ENCODE measurements at regions of chr12 and their contacts with region 1.

Region 1: GRCh38 chr12:132470978-132471857 is 18.7 kb upstream of the FBRSL1 start:
- DNase-seq: peak in 2 of 14 experiments; percentile 55 to 60
- ATAC-seq: peak; percentile 13
- H3K4me3 ChIP-seq: no peak overlapping the region
- H3K4me3 Mint-ChIP-seq: peak overlapping the region; percentile 70
- H3K27ac ChIP-seq: no peak overlapping the region
- H3K27ac Mint-ChIP-seq: peak overlapping the region; percentile 85
- H3K4me1 ChIP-seq: peaks cover 37% of the 10 kb centered on the region
- H3K4me1 Mint-ChIP-seq: peaks cover 50% of the 10 kb centered on the region
- H3K27me3 ChIP-seq: no peaks in the 10 kb centered on the region
- H3K27me3 Mint-ChIP-seq: no peaks in the 10 kb centered on the region
- CTCF ChIP-seq: no peak

Region 2: DNA sequence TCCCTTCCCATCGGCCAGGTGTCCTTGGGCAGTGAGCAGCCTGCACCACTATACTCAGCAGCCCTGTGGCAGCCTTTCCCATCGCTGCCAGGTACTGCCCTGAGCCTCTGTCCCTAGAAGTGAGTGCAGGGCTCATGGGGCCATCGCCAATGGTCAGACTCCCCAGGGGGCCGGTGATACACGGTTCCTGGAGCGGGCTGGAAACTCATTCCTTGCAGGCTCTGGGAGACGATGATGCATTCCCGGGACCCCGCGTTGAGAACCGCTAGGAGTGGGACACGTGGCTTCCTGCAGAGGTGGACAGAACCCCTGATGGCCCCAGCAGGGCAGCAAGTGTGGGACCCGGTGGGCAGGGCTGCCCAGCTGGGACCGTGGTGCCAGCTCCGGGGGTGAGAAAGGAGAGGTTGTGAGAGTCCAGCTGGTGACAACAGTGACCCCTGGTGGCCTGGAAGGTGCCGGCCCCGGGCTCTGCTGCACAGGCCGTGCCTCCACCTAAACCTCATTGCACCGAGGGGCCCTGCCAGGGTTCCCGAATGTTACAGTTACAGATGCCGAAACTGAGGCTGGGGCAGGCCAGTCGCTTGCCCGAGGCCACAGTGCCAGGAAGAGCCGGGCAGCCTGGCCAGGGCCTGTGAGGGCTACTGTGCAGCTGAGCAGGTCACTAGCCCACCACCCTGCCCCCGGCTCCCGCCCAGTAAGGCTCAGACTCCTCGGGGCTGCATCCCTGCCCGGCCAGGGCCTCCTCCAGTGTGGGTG is 52.5 kb after region 1 on chr12:
- CTCF ChIA-PET with region 1: no interaction called
- POLR2A ChIA-PET with region 1: no interaction called
- intact Hi-C with region 1: loop called in 1 of 2 experiments (anchors 2 kb)
- DNase-seq: peak; percentile 61 to 84 (median 71)
- ATAC-seq: peak; percentile 69
- H3K4me3 ChIP-seq: no peak overlapping the region
- H3K4me3 Mint-ChIP-seq: no peak overlapping the region
- H3K27ac ChIP-seq: no peak overlapping the region
- H3K27ac Mint-ChIP-seq: no peak overlapping the region
- H3K4me1 ChIP-seq: peaks cover 21% of the 10 kb centered on the region
- H3K4me1 Mint-ChIP-seq: peaks cover 11% of the 10 kb centered on the region
- H3K27me3 ChIP-seq: no peaks in the 10 kb centered on the region
- H3K27me3 Mint-ChIP-seq: no peaks in the 10 kb centered on the region
- CTCF ChIP-seq: peak; percentile 79

Measured in CD4-positive, alpha-beta T cell (primary cell).